ENCODE measurements at regions of chr11 and their contacts with region 1.

Region 1: GRCh38 chr11:19561011-19561410 is 151.6 kb upstream of the NAV2 start:
- DNase-seq: no peak
- ATAC-seq: no peak
- H3K4me3 ChIP-seq: no peak overlapping the region
- H3K4me3 Mint-ChIP-seq: no peak overlapping the region
- H3K27ac ChIP-seq: no peak overlapping the region
- H3K27ac Mint-ChIP-seq: no peak overlapping the region
- H3K4me1 ChIP-seq: no peaks in the 10 kb centered on the region
- H3K4me1 Mint-ChIP-seq: peaks cover 0 to 4% (median 0%) of the 10 kb centered on the region in 7 donors
- H3K27me3 ChIP-seq: no peaks in the 10 kb centered on the region
- H3K27me3 Mint-ChIP-seq: peaks cover 9 to 20% (median 15%) of the 10 kb centered on the region in 5 donors

Region 2: GRCh38 chr11:19605520-19606371 is 44.7 kb after region 1 on chr11:
- CTCF ChIA-PET with region 1: no interaction called
- POLR2A ChIA-PET with region 1: no interaction called
- intact Hi-C with region 1: no loop called
- DNase-seq: no peak
- ATAC-seq: no peak
- H3K4me3 ChIP-seq: no peak overlapping the region
- H3K4me3 Mint-ChIP-seq: no peak overlapping the region
- H3K27ac ChIP-seq: no peak overlapping the region
- H3K27ac Mint-ChIP-seq: no peak overlapping the region
- H3K4me1 ChIP-seq: no peaks in the 10 kb centered on the region
- H3K4me1 Mint-ChIP-seq: peaks cover 0 to 6% (median 0%) of the 10 kb centered on the region in 7 donors
- H3K27me3 ChIP-seq: no peaks in the 10 kb centered on the region
- H3K27me3 Mint-ChIP-seq: peaks cover 0 to 49% (median 39%) of the 10 kb centered on the region in 5 donors

Region 3: DNA sequence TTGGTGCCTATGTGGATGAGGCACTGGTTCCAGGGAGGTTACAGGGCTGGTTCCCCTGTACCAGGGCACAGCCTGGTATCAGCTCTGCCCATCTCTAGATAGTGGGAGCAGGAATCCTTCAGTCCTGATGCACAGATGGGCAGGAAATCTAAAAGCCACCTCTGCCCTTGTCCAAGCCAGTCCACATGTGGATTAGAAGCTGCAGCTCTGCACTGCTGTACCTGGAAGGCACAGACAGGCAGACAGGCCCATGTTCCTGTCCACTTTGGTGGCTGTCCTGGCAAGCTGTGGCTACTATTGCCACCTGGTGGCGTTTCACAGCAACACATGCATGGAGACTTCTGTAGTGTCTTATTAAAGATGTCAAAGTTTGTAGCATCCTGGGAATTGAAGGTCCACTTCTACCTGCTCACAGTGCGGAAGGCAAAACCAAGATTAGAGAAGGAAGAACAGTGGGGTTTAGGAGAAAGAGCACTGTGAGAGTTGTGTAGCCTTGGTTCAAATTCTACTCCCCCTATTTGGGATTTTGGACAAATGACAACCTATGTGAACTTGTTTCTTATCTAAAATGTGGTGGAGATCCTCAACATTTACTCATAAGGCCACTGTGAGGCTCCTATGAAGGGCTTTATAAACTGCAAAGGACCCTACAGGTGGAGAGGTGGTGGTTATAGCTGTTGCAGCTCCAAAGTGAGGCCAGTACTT is 181.7 kb after region 1 on chr11:
- CTCF ChIA-PET with region 1: interaction called, 32 read pairs
- POLR2A ChIA-PET with region 1: no interaction called
- intact Hi-C with region 1: loop called (anchors 1 kb)
- DNase-seq: peak; percentile 8 to 57 (median 40)
- ATAC-seq: peak; percentile 81
- H3K4me3 ChIP-seq: no peak overlapping the region
- H3K4me3 Mint-ChIP-seq: no peak overlapping the region
- H3K27ac ChIP-seq: no peak overlapping the region
- H3K27ac Mint-ChIP-seq: no peak overlapping the region
- H3K4me1 ChIP-seq: no peaks in the 10 kb centered on the region
- H3K4me1 Mint-ChIP-seq: no peaks in the 10 kb centered on the region
- H3K27me3 ChIP-seq: no peaks in the 10 kb centered on the region
- H3K27me3 Mint-ChIP-seq: peaks cover 0 to 12% (median 0%) of the 10 kb centered on the region in 5 donors

Region 4: DNA sequence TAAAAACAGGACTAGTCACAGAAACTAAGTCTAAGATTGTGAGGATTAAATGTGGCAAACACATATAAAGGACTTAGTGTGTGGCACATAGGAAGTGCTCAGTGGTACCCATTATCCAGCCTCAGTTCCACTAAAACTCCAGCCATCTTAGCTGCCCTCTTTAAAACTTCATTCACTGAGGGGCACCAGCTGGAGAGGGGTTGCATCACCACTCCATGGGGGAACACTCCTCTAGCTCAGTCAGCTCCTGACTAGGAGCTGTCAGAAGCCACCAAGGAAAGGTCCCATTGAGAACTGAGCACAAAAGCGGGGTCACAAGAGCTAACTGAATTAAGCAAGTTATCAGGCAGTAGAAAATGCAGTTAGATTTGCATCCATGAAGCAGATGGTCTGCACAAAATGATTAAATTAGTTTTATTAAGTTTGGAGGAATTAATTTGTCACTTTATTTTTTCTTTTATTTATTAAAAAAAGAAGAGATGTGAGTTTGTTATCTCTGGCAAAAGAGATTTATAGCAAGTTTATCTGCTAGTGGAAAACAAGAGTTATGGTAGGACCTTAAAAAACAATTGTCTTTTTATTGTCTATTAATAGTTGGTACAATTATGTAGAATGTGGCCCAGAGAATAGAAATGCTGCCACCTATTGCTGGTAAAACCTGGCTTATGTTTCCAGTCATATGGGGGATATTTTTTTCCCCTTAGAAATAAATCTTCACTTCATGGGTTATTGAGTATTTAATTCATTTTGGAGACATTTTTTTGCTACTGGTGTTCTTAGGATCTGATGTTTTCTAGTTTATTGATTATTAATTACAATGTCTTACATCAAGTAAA is 247.3 kb after region 1 on chr11:
- CTCF ChIA-PET with region 1: no interaction called
- POLR2A ChIA-PET with region 1: no interaction called
- intact Hi-C with region 1: loop called in 1 of 2 experiments (anchors 1 kb)
- DNase-seq: no peak
- ATAC-seq: no peak
- H3K4me3 ChIP-seq: no peak overlapping the region
- H3K4me3 Mint-ChIP-seq: no peak overlapping the region
- H3K27ac ChIP-seq: no peak overlapping the region
- H3K27ac Mint-ChIP-seq: no peak overlapping the region
- H3K4me1 ChIP-seq: no peaks in the 10 kb centered on the region
- H3K4me1 Mint-ChIP-seq: no peaks in the 10 kb centered on the region
- H3K27me3 ChIP-seq: no peaks in the 10 kb centered on the region
- H3K27me3 Mint-ChIP-seq: peaks cover 0 to 20% (median 7%) of the 10 kb centered on the region in 5 donors

Region 5: DNA sequence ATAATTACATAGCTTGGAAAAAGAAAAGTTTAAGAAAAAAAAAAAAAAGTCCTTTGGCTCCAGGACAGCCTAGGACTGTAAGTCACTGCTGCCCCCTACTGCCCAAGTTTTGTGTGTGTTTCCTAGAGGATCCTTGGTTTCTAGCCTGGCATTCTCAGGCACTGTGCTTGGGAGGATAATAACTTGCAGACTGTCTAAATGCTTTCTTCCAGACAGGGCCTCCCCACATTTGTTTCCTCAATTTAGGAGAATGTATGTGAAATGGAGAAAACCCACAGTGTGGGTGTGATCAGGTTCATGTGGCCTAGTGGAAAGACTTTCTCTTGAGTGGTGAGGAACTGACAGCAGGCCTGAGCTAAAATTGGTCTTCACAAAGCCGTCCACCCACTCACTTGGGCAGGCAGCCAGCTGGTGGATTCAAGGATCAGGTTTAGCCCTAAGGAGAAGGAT is 342.6 kb after region 1 on chr11:
- CTCF ChIA-PET with region 1: interaction called, 5 read pairs
- POLR2A ChIA-PET with region 1: no interaction called
- intact Hi-C with region 1: loop called (anchors 1 to 2 kb)
- DNase-seq: peak in 4 of 9 donors; percentile 1 to 23 (median 4)
- ATAC-seq: no peak
- H3K4me3 ChIP-seq: no peak overlapping the region
- H3K4me3 Mint-ChIP-seq: no peak overlapping the region
- H3K27ac ChIP-seq: no peak overlapping the region
- H3K27ac Mint-ChIP-seq: no peak overlapping the region
- H3K4me1 ChIP-seq: no peaks in the 10 kb centered on the region
- H3K4me1 Mint-ChIP-seq: no peaks in the 10 kb centered on the region
- H3K27me3 ChIP-seq: no peaks in the 10 kb centered on the region
- H3K27me3 Mint-ChIP-seq: peaks cover 0 to 9% (median 0%) of the 10 kb centered on the region in 5 donors

Measured in naive thymus-derived CD4-positive, alpha-beta T cell (primary cell).